ENCODE measurements at regions of chr6 and their contacts with region 1.

Region 1: GRCh38 chr6:55069132-55069781 is 105.1 kb upstream of the HCRTR2 start:
- DNase-seq: peak; percentile 39
- H3K4me3 ChIP-seq: no peak overlapping the region
- H3K27ac ChIP-seq: no peak overlapping the region
- H3K4me1 ChIP-seq: no peaks in the 10 kb centered on the region
- H3K27me3 ChIP-seq: no peaks in the 10 kb centered on the region
- CTCF ChIP-seq: peak; percentile 76 to 80

Region 2: GRCh38 chr6:54244430-54244829 is 824.8 kb before region 1 on chr6:
- CTCF ChIA-PET with region 1: no interaction called
- dilution Hi-C with region 1: no loop called
- in situ Hi-C with region 1: no loop called
- intact Hi-C with region 1: loop called (anchors 10 kb)
- DNase-seq: peak; percentile 10
- H3K4me3 ChIP-seq: no peak overlapping the region
- H3K27ac ChIP-seq: no peak overlapping the region
- H3K4me1 ChIP-seq: no peaks in the 10 kb centered on the region
- H3K27me3 ChIP-seq: no peaks in the 10 kb centered on the region
- CTCF ChIP-seq: peak; percentile 63 to 67

Region 3: DNA sequence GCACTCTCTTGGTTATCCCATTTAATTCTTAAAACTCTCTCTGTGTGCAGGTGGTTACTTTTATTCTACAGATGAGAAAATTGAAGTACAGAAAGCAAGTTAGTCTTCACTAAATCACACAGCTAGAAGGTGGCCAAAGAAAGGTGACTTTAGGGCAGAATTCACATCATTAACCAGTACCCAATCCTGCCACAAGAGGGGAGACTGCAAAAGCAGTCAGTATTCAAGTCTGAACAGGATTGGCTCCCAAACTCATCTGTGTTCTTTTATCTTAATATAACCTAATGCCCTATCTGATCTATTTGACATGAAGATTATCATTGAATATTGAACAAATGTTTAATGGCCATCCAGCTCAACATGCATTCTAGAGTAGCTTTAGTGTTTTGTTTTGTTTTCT is 448.0 kb before region 1 on chr6:
- CTCF ChIA-PET with region 1: no interaction called
- dilution Hi-C with region 1: no loop called
- in situ Hi-C with region 1: loop called in 1 of 2 experiments (anchors 25 kb)
- intact Hi-C with region 1: no loop called
- DNase-seq: no peak
- H3K4me3 ChIP-seq: no peak overlapping the region
- H3K27ac ChIP-seq: no peak overlapping the region
- H3K4me1 ChIP-seq: peaks cover 5% of the 10 kb centered on the region
- H3K27me3 ChIP-seq: no peaks in the 10 kb centered on the region
- CTCF ChIP-seq: peak; percentile 82 to 85

Region 4: GRCh38 chr6:54717849-54718455 is 351.3 kb before region 1 on chr6:
- CTCF ChIA-PET with region 1: interaction called, 3 read pairs
- dilution Hi-C with region 1: no loop called
- in situ Hi-C with region 1: loop called (anchors 10 to 25 kb)
- intact Hi-C with region 1: loop called (anchors 1 kb)
- DNase-seq: peak; percentile 81
- H3K4me3 ChIP-seq: peak overlapping the region in 2 of 3 experiments; percentile 37 to 43
- H3K27ac ChIP-seq: peak overlapping the region; percentile 91
- H3K4me1 ChIP-seq: peaks cover 22% of the 10 kb centered on the region
- H3K27me3 ChIP-seq: no peaks in the 10 kb centered on the region
- CTCF ChIP-seq: peak; percentile 82 to 85

Region 5: DNA sequence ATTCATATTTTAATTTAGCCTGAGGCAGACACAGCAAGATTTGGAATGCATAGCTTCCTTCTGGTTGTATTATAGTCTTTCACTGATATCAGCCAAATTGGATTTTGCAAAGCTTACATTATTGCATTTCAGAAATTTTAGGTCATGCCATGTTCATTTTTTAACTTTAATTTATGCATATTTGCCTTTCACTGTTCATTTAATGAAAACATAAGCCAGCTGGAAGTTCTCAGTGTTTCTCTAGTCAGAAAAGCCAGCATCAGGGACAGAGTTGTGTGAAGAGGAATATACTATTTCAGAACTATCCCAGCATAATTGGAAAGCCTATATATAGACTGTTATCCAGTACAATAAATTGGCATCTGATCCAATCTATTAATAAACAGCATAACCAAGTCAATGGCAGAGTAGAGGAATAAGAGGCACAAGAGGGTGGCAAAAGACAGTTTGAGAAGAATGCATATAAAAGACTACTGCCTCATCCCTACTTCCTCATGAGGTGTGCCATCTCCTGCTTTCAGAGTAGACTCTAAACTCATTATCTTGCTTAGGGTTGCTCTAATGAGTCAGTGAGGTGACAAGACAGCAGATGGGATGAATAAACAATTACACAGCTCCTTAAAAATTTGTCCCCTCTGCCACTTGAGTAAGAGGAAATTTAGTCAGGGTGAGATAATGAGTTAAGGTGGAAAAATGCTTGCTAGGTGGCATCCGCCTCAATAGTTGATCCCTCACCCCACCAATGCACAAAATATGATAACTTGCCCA is 54.8 kb before region 1 on chr6:
- CTCF ChIA-PET with region 1: no interaction called
- dilution Hi-C with region 1: no loop called
- in situ Hi-C with region 1: no loop called
- intact Hi-C with region 1: no loop called
- DNase-seq: no peak
- H3K4me3 ChIP-seq: no peak overlapping the region
- H3K27ac ChIP-seq: no peak overlapping the region
- H3K4me1 ChIP-seq: no peaks in the 10 kb centered on the region
- H3K27me3 ChIP-seq: no peaks in the 10 kb centered on the region
- CTCF ChIP-seq: no peak

Region 6: DNA sequence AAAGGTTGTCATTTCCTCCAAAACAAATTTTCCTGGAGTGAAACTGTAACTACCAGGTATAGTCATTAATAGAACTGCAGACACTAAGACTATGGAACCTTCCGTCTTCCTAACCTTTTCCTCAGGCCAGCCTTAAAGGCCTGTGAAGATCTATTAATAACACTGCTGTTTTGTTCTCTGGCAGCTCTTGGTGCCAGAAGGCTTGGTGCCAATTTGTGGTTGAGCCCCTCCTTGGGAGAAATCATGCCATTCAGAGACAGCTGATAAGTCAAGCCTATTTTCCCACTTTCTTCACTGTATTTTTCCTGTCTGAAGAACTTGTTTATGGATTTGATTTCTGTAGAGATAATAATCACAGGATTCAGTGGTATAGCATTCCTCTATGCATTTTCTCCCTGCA is 169.8 kb after region 1 on chr6:
- CTCF ChIA-PET with region 1: no interaction called
- dilution Hi-C with region 1: no loop called
- in situ Hi-C with region 1: no loop called
- intact Hi-C with region 1: loop called (anchors 5 kb)
- DNase-seq: peak; percentile 8
- H3K4me3 ChIP-seq: no peak overlapping the region
- H3K27ac ChIP-seq: no peak overlapping the region
- H3K4me1 ChIP-seq: no peaks in the 10 kb centered on the region
- H3K27me3 ChIP-seq: peaks cover 7% of the 10 kb centered on the region
- CTCF ChIP-seq: no peak